HepG2 (cell line): ENCODE measurements at regions of chrX and their contacts with region 1.

Region 1: DNA sequence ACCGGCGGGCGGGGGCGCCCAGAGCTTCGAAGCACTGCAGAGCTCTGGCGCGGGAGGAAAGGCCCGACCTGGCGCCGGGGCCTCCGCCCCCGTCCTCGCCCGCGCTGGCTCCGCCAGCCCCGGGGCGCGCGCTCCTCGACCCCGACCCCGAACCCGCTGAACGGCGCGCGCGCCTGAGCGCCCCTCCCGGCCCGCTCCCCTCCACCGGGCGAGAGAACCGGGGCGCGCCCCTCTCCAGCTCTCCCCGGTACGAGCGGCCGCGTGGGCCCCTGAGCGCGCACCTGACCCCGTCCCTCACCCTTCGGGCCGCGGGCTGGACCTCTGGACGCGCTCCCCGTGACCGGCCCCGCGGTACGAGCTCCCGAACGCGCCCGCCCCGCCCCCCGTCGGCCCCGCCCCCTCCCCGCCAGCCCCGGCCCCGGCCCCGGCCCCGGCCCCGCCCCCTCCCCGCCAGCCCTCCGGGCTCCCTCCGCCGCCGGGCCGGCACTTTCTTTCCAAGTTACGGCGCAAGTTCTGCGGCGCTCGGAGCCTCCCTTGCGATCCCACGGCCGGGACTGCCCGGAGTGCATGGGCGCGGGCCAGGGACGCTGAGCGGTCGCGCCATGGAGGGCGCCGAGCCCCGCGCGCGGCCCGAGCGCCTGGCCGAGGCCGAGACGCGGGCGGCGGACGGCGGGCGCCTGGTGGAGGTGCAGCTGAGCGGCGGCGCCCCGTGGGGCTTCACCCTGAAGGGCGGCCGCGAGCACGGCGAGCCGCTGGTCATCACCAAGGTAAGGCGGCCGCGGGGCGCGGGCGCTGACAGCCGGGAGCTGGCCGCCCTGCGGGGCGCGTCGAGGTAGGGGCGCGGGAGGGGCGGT is at the start of gene SHROOM2:
- DNase-seq: no peak
- ATAC-seq: peak; percentile 57
- H3K4me3 ChIP-seq: peak within 1 kb of the TSS; percentile 68 to 76 (median 71)
- H3K27ac ChIP-seq: peak within 1 kb of the TSS; percentile 51
- H3K4me1 ChIP-seq: peaks cover 22% of the 10 kb centered on the region
- H3K27me3 ChIP-seq: no peaks in the 10 kb centered on the region; a peak in 1 of 5 replicates
- CTCF ChIP-seq: no peak
- EP300 ChIP-seq: no peak
- POLR2A ChIP-seq: no peak
- RAD21 ChIP-seq: no peak
- total RNA-seq, gene SHROOM2: 1.3 and 1.4 TPM in 2 replicates

Region 2: DNA sequence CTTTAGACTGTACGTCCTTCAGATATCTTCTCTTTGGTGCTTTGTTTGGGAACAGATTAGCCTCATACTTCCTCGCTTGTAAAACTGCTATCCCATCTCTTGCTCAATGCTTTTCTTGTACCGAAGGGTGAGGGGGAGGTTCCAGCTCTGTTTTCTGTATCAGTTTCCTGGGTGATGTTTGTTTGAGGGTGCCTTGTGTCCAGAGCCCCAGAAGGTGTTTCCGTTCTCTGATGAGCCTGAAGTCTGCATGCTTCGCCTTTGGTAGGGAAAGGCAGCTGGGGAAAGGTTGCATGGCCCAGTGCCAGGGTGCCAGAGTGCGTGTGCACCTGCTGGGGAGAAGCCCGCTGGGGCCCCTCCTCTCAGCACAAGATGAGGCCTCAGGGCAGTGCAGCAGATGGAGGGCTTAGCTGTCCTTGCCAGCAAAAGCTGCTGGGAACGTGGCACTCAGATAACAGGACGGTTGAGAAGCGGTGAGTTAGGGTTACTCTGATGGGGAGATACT is 247.6 kb before region 1 on chrX:
- CTCF ChIA-PET with region 1: no interaction called
- POLR2A ChIA-PET with region 1: no interaction called
- in situ Hi-C with region 1: no loop called
- intact Hi-C with region 1: no loop called
- DNase-seq: peak; percentile 83
- ATAC-seq: peak; percentile 91
- H3K4me3 ChIP-seq: peak overlapping the region in 1 of 3 experiments; percentile 40; a peak in 1 of 6 replicates
- H3K27ac ChIP-seq: peak overlapping the region; percentile 77
- H3K4me1 ChIP-seq: peaks cover 51% of the 10 kb centered on the region
- H3K27me3 ChIP-seq: no peaks in the 10 kb centered on the region
- CTCF ChIP-seq: no peak
- EP300 ChIP-seq: peak in 1 of 2 experiments; percentile 21; a peak in 1 of 4 replicates
- POLR2A ChIP-seq: no peak
- RAD21 ChIP-seq: no peak

Region 3: GRCh38 chrX:9765072-9765736 is 21.0 kb before region 1 on chrX:
- CTCF ChIA-PET with region 1: no interaction called
- POLR2A ChIA-PET with region 1: no interaction called
- in situ Hi-C with region 1: no loop called
- intact Hi-C with region 1: no loop called
- DNase-seq: no peak
- ATAC-seq: no peak
- H3K4me3 ChIP-seq: no peak overlapping the region
- H3K27ac ChIP-seq: no peak overlapping the region
- H3K4me1 ChIP-seq: peaks cover 16% of the 10 kb centered on the region
- H3K27me3 ChIP-seq: no peaks in the 10 kb centered on the region
- CTCF ChIP-seq: no peak
- EP300 ChIP-seq: no peak
- POLR2A ChIP-seq: no peak
- RAD21 ChIP-seq: no peak

Region 4: DNA sequence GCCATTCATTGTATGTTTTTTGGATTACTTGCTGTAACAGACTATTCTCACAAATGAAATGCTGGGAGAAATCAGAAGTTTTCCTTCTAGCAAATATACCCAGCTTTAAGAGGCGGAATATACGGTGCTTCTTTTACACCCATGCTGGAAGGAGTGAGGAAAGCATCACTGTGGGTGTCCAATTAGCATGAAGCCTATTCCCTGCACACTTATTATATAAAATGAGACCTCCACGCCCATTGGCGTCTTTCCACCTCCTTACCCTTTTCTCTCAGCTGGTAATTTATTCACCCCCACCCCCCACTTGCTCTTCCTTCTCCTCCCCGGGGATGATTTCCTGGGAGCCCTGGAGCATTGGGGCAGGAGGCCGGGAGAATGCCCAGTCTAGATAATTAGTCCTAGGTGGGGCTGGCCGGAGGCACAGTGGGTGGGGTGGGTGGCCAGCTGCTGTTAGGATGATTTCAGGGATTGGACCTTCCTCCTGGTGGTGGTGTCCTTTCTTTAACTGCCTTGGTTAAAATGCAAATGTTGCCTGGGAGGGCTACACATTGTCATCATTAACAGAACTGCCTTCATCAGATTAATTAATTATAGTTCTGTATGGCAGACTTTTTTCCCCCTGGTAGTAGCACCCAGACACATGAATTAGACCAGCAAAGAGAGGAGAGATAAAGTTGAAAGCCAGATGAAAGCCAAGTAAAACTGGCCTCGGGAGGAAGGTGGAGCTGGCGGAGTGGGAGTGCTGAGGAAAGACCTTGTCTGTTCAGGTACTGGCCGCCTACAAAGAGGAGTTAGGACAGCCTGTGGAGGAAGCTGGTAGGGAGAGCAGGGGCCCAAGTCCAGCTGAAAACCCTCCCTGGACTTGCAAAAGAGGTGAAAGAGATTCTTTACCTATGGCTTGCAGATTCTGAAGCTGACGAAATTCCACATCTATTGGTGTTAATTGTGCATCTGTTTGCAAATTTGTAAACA is 11.5 kb after region 1 on chrX:
- CTCF ChIA-PET with region 1: no interaction called
- POLR2A ChIA-PET with region 1: interaction called, 3 read pairs
- in situ Hi-C with region 1: no loop called
- intact Hi-C with region 1: loop called (anchors 1 kb)
- DNase-seq: no peak
- ATAC-seq: peak; percentile 74
- H3K4me3 ChIP-seq: no peak overlapping the region
- H3K27ac ChIP-seq: no peak overlapping the region
- H3K4me1 ChIP-seq: 0 out of 2 replicates have a peak, but pooled peaks cover 8% of the 10 kb centered on the region
- H3K27me3 ChIP-seq: no peaks in the 10 kb centered on the region
- CTCF ChIP-seq: no peak
- EP300 ChIP-seq: no peak
- POLR2A ChIP-seq: no peak
- RAD21 ChIP-seq: no peak